AG04450 (cell line): ENCODE measurements at regions of chr12 and their contacts with region 1.

Region 1: GRCh38 chr12:122356192-122356635 is 66.3 kb downstream of the CLIP1 start:
- DNase-seq: peak; percentile 37
- H3K4me3 ChIP-seq: no peak overlapping the region
- H3K27ac ChIP-seq: no peak overlapping the region
- H3K27me3 ChIP-seq: no peaks in the 10 kb centered on the region
- CTCF ChIP-seq: peak; percentile 78

Region 2: DNA sequence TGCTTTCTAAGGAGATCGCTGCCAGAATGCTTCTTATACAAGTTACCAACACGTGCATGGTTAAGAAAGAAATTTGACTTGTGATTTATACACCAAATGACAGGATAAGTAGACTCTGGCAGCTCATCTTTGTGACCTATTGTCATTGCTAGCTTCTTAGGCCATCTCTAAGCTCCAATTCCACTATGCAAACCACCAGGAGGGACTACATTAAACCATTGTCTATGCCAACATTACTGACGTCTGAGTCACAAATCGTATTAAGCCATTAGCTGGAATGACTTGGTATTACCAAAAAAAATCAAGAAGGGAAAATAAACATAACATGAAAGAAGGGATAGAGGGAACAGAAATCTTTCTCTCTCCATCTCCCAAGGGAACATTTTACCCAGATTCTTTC is 74.1 kb before region 1 on chr12:
- CTCF ChIA-PET with region 1: interaction called, 15 read pairs
- POLR2A ChIA-PET with region 1: no interaction called
- DNase-seq: peak; percentile 45
- H3K4me3 ChIP-seq: no peak overlapping the region
- H3K27ac ChIP-seq: peak overlapping the region; percentile 54
- H3K27me3 ChIP-seq: no peaks in the 10 kb centered on the region
- CTCF ChIP-seq: 0 out of 2 replicates have a peak, but pooled peaks have one; percentile 7

Region 3: GRCh38 chr12:122336015-122336946 is 19.9 kb before region 1 on chr12:
- CTCF ChIA-PET with region 1: interaction called, 37 read pairs
- POLR2A ChIA-PET with region 1: no interaction called
- DNase-seq: no peak
- H3K4me3 ChIP-seq: no peak overlapping the region
- H3K27ac ChIP-seq: no peak overlapping the region
- H3K27me3 ChIP-seq: no peaks in the 10 kb centered on the region
- CTCF ChIP-seq: peak; percentile 72

Region 4: DNA sequence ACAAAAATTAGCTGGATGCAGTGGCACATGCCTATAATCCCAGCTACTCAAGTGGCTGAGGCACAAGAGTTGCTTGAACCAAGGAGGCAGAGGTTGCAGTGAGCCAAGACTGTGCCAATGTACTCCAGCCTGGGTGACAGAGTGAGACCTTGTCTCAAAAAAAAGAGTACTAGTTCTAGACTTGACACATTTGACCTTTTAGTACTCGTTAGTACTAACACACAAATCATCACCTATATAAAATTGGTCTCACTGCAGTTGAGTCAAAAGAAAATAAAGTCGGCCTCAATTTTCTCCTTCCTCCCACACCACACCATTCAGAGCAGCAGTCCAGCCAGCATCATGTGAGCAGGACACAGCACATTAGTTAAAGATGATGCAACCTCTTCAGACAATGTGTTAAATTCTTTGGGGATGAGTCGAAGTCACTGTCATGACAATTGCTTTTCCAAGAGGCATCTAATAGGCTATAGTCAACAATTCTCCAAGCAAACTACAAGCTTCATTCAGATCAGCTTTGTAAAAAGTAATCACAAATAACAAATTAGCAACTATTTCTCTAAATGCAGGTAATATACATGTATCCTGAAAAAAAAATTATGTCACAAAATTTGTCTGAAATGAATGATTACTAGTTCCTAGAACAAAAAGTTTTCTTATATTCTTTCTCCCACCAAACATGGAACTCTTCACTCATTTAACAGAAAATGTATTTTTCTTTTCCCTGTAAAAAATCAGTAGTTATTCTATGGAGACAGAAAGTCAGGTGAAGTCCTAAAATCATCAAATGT is 10.7 kb after region 1 on chr12:
- CTCF ChIA-PET with region 1: interaction called, 36 read pairs
- POLR2A ChIA-PET with region 1: no interaction called
- DNase-seq: peak; percentile 67
- H3K4me3 ChIP-seq: no peak overlapping the region
- H3K27ac ChIP-seq: peak overlapping the region; percentile 83
- H3K27me3 ChIP-seq: no peaks in the 10 kb centered on the region
- CTCF ChIP-seq: no peak

Region 5: GRCh38 chr12:122389697-122390096 is 33.5 kb after region 1 on chr12:
- CTCF ChIA-PET with region 1: interaction called, 11 read pairs
- POLR2A ChIA-PET with region 1: no interaction called
- DNase-seq: no peak
- H3K4me3 ChIP-seq: no peak overlapping the region
- H3K27ac ChIP-seq: no peak overlapping the region
- H3K27me3 ChIP-seq: no peaks in the 10 kb centered on the region
- CTCF ChIP-seq: no peak